Testis (tissue), 5 donors: ENCODE measurements at regions of chr22 and their contacts with region 1.

Region 1: GRCh38 chr22:31625661-31626426 is 36.2 kb downstream of the PISD start:
- DNase-seq: peak; percentile 87
- H3K4me3 ChIP-seq: no peak overlapping the region
- H3K27ac ChIP-seq: peak overlapping the region; percentile 20 to 76
- H3K4me1 ChIP-seq: peaks cover 52% of the 10 kb centered on the region
- H3K27me3 ChIP-seq: no peaks in the 10 kb centered on the region
- CTCF ChIP-seq: no peak
- POLR2A ChIP-seq: no peak

Region 2: DNA sequence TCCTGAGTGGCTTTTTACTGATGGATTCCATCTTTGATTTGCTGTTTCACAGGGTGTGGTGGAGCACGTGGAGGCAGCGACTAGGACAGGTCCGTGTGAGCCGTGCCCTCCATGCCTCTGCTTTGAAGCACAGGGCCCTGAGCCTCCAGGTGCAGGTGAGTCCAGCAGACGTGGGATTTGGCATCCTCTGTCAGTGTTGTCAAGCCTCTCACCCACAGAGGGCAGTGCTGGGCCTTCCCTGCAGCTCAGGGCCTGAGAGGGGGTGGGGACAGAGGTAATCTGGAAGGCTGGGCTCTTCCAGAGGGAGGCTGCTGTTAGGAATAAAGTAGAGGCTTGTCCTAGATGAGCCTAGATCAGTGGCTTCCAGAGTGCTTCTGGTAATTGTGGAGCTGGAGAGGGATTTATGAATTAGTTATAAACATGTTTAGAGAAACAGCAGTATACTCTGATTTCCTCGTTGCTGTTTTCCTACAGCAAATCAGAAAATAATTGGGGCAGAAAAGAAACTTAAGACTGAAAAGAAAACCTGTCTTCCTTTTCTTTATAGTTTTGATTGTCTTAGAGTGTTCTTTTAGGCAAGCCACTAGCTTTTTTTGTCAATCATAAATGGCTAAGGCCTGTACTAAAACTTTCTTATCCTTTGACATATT is 64.5 kb before region 1 on chr22:
- intact Hi-C with region 1: loop called (anchors 10 kb)
- DNase-seq: peak; percentile 93
- H3K4me3 ChIP-seq: no peak overlapping the region
- H3K27ac ChIP-seq: no peak overlapping the region
- H3K4me1 ChIP-seq: no peaks in the 10 kb centered on the region
- H3K27me3 ChIP-seq: no peaks in the 10 kb centered on the region
- CTCF ChIP-seq: peak; percentile 53 to 70 (median 64)
- POLR2A ChIP-seq: no peak